ENCODE measurements at regions of chr2 and their contacts with region 1.

Region 1: DNA sequence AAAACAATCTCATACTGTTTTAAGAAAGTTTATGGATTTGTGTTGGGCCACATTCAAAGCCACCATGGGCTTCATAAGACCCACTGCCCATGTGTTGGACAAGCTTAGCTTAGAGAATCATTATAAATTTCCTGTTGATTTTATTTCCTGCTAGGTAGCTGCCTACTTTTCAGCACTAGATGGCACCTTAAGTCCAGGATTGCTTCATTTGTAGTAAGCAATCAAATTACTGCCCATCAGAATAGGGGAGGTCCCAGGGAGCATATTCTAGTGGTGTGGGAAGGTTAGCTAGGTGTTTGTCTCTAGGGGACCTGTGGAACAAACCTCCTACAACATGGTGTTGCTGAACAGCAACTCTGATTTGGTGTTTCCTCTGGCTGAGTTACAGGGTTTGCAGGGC is 11.0 kb upstream of the DCDC2C start:
- DNase-seq: no peak
- H3K4me3 Mint-ChIP-seq: no peak overlapping the region
- H3K27ac Mint-ChIP-seq: no peak overlapping the region
- H3K4me1 Mint-ChIP-seq: no peaks in the 10 kb centered on the region
- H3K27me3 Mint-ChIP-seq: peaks cover 16% of the 10 kb centered on the region

Region 2: DNA sequence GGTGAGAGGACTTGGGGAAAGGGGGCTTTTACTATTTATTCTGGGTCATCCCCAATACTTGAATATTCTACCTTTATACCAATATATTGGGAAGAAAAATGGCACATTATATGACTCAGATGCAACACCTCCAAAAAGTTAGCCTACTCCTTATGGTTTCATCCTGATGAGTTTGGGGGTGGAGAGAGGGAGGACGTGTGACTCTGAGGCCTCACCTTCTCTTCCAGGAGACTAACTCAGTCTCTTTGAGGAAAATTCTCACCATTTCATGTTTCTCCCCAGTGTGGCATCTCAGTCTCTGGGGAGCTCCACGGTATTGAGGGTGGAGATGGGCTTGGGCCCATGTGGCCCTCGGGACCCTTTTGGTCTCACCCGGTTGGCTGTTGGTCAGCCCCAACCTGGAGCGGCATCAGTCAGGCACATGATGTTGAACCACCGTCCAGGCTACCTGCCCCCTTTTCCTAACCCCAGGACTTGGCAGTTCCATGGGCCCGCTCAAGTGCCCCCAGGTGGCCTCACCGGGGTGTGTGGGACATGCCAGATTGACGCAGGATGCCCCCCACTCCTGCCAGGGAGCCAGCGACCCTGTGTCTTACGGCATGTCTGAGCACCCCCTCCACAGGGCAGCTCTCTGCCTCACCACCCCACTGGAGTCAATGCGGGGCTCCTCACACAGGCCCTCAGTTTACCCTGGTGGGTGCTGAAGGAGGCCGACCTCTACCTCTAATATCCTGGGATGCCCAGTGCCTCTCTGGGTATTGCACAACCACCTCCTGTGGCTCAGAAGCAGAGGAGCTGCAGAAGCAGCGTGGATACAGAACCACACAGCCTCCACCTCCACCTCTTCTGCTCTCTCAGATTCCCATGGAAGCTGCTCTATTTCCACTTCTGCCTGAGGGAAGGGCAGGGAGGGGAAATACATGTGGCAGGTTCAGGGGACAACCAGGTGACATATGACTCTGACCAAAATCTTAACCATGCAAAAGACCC is 612.1 kb before region 1 on chr2:
- CTCF ChIA-PET with region 1: no interaction called
- POLR2A ChIA-PET with region 1: no interaction called
- DNase-seq: no peak
- H3K4me3 Mint-ChIP-seq: no peak overlapping the region
- H3K27ac Mint-ChIP-seq: no peak overlapping the region
- H3K4me1 Mint-ChIP-seq: no peaks in the 10 kb centered on the region
- H3K27me3 Mint-ChIP-seq: peaks cover 6% of the 10 kb centered on the region

Region 3: GRCh38 chr2:3677436-3677835 is 14.9 kb before region 1 on chr2:
- CTCF ChIA-PET with region 1: no interaction called
- POLR2A ChIA-PET with region 1: no interaction called
- DNase-seq: no peak
- H3K4me3 Mint-ChIP-seq: no peak overlapping the region
- H3K27ac Mint-ChIP-seq: no peak overlapping the region
- H3K4me1 Mint-ChIP-seq: no peaks in the 10 kb centered on the region
- H3K27me3 Mint-ChIP-seq: peaks cover 3% of the 10 kb centered on the region

Region 4: DNA sequence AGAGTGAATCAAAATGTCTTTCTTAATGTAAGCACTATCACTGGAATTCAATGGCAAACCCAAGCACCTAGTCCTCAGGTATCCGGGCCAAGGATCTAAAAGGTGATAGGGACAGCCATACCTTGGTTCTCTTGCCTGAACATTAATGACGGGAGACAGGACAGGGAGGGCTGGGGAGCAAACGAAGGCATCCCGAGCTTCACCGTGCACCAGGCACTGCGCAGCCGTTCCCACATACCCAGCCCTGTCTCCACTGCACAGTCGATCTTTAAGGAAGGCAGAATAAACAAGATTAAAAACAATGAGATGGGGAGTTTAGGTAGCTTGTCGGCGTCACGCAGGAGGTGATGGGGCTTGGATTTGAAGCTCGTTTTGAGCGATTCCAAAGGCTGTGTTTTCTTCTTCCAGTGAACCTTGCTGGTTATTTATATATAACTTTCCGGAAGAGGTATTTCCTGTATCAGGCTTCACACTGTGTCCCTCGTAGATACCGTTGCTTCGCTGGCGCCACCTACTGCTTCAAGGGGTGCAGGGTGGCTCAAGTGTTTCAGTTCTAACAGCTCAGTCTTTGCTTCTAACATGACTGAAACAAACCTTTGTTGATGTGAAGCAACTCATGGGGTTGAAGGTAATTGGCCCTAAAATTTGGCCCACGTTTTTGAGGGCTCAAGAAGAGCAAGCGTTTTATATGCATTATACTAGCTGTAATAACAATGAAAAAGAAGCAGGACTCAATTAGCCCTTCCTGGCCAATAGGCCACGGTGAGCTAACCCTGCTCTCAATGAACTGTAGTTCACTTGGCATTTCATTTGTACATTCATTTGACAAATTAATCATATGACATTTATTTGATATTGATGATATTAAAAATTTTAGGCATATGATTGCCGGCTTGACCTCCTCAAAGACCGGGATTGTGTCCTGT is 88.4 kb after region 1 on chr2:
- CTCF ChIA-PET with region 1: interaction called, 12 read pairs
- POLR2A ChIA-PET with region 1: no interaction called
- DNase-seq: peak; percentile 79
- H3K4me3 Mint-ChIP-seq: peak overlapping the region; percentile 7
- H3K27ac Mint-ChIP-seq: no peak overlapping the region
- H3K4me1 Mint-ChIP-seq: peaks cover 13% of the 10 kb centered on the region
- H3K27me3 Mint-ChIP-seq: peaks cover 12% of the 10 kb centered on the region